AG04450 (cell line): ENCODE measurements at regions of chr10 and their contacts with region 1.

Region 1: DNA sequence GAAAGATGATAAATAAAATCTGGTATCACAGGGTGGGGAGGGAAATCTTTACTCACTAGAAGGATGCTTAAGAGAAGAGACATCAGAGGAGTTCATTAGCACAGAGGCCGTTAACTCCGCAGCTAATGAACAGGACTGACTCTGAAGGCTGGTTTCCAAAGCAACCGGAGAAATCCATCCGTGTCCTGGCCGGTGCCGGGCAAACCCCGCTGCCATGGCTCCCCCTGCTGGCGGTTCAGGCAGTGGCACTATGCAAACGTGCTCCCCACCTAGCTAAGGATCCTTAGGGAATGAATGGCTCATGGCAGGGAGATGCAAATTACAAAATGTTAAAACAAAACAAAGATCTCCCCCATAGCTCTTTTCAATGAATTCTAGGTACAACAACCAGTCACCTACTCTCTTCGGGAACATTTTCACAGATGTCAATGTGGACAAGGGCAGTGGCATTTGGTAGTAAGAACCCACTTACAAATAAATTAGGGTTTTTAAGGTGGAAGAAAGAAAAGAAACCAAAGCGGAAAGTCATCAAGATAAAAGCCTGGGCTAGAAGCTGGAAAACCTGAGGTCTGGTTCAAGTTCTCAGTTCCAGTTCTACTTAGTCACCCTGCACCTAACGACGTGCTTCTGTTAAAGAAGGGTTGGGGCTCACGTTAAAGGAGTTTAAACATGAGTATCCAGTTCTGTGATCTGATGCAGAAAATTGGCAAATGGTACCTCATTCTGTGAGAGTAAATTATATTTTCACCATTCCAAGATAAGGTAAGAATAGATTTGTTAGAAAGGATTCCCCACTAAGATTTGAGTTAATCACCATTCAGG is 138.2 kb downstream of the SVIL start:
- DNase-seq: no peak
- H3K4me3 ChIP-seq: no peak overlapping the region
- H3K27ac ChIP-seq: no peak overlapping the region
- H3K27me3 ChIP-seq: no peaks in the 10 kb centered on the region
- CTCF ChIP-seq: peak; percentile 98

Region 2: DNA sequence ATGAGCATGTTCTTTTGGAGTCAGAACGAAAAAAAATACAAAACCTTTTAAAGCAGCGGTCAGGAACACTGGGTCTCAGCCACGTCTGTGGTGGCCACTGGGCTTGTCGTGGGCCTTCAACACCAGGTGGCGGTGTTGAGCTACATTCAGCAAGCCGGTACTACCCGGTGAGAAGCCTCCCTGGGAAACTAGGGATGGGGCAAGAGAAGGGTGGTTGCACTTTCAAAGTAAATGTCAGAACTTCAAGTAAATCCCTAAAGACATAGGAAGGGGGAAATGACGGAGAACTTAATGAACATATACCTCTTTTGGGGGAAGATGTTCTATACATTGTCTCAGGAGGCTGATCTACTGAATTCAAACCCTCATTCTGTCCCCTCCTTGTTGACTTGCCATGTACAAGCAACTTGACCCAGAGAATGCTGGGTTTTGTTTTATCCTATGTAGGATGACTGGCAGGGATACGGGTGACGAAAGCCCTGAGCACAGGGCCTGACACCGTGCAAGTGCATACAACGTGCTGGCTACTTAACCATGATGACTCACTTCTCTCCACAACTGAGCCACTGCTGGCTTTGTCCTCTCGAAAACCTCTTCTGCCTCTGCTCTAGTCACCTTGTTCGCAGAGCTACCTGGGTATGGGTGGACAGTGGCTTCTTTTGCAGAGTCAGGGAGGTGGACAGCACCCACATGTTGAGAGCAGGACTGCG is 868.2 kb before region 1 on chr10:
- CTCF ChIA-PET with region 1: interaction called, 10 read pairs
- POLR2A ChIA-PET with region 1: no interaction called
- DNase-seq: peak; percentile 44
- H3K4me3 ChIP-seq: no peak overlapping the region
- H3K27ac ChIP-seq: no peak overlapping the region
- H3K27me3 ChIP-seq: peaks cover 13% of the 10 kb centered on the region
- CTCF ChIP-seq: peak; percentile 97

Region 3: DNA sequence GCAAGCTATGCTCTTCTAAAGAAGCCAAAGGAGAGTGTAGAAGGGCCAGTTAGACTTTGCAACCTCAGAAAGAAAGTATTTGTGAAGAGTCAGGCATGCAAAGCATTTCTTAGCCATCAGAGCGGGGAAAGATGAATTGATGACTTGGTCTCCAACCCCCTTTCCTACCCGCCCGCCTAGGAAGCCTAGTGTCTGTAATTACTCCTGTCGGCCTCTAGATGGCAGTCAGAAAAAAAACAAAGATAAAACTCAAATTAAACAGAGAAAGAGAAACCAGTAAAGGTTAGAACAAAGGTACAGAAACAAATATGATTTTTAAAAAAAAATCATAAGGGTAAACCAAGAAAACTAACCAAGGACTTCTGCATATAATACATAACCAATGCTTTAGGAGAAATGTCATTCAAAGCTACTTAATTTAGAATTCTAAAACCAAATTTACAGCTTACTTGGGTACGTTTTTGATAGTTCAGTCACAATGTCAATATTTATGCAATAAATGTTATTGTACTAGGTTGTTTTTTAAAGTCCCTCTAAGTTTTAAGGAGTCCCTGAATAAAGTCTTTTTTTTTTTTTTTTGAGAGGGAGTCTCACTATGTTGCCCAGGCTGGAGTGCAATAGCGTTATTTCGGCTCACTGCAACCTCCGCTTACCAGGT is 110.1 kb before region 1 on chr10:
- CTCF ChIA-PET with region 1: interaction called, 11 read pairs
- POLR2A ChIA-PET with region 1: no interaction called
- DNase-seq: no peak
- H3K4me3 ChIP-seq: no peak overlapping the region
- H3K27ac ChIP-seq: no peak overlapping the region
- H3K27me3 ChIP-seq: peaks cover 14% of the 10 kb centered on the region
- CTCF ChIP-seq: peak; percentile 74

Region 4: DNA sequence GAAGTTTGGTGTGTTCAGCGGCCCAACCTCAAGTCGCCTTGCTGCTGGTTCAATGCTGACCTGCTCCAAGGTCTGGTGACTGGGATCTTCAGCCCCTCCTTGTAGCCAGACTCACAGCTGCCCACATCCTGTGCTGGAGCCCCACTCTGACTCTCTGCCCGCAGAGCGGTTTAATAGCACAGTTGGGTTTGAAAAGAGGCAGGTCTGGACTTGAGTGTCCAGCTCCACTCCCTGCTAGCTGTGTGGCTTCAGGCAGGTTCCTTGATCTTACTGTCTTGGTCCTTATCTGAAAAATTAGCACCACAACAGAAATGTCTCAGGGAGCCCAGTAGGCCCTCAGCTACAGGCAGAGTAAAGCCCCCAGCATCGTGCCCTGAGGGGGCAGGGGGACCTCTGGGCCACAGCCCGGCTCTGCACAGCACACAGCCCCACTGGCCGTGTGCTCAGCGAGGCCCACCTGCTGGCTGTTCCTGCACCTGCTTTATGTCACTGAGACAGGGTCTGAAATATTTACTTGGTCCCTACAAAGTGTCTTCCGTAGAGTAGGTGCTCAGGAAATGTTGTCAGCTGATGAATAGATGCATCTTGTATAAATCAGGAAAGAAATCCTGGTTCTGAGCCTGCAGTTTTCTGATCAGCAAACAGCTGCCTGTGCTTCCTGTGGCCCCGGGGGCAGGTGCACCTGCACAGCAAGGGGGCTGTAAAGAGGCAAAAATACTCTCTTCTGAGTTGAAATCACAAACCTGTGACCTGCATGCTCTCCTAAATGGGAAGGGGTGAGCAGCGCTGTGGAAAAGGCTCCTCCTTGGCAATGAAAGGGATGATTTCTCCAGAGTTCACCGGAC is 17.2 kb before region 1 on chr10:
- CTCF ChIA-PET with region 1: interaction called, 12 read pairs
- POLR2A ChIA-PET with region 1: no interaction called
- DNase-seq: no peak
- H3K4me3 ChIP-seq: no peak overlapping the region
- H3K27ac ChIP-seq: no peak overlapping the region
- H3K27me3 ChIP-seq: no peaks in the 10 kb centered on the region
- CTCF ChIP-seq: no peak

Region 5: DNA sequence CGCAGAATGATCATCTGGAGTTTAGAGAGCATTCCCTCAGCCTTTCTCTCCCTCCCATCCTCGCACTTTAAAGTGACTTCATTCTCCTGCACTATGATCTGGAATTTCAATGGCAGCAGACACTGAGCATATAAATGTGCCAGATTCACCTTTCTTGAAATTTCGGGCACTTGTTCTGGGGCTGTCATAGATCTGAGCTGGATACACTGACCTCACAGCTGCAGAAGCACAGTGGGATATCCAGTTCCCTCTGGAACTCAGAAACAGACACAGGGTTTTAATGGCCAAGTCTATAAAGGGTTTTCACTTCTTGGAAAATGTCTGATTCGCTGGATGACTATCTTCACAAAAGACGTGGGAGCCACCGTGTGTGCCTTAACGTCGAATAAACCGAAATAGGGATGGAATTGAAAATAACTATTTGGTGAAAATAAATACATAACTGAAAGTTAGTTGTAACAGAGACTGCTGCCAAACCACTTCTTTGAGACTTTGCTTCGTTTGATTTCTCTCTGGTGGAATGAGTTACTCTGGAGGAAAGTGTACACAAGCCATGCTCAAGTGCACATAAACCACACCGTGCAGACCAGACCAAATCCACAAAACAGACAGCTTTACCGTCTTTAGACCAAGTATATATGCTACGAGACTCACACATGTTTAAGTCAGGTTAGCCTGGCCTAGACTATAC is 12.1 kb after region 1 on chr10:
- CTCF ChIA-PET with region 1: interaction called, 30 read pairs
- POLR2A ChIA-PET with region 1: no interaction called
- DNase-seq: no peak
- H3K4me3 ChIP-seq: no peak overlapping the region
- H3K27ac ChIP-seq: no peak overlapping the region
- H3K27me3 ChIP-seq: no peaks in the 10 kb centered on the region
- CTCF ChIP-seq: no peak